ENCODE measurements at regions of chr20 and their contacts with region 1.

Region 1: DNA sequence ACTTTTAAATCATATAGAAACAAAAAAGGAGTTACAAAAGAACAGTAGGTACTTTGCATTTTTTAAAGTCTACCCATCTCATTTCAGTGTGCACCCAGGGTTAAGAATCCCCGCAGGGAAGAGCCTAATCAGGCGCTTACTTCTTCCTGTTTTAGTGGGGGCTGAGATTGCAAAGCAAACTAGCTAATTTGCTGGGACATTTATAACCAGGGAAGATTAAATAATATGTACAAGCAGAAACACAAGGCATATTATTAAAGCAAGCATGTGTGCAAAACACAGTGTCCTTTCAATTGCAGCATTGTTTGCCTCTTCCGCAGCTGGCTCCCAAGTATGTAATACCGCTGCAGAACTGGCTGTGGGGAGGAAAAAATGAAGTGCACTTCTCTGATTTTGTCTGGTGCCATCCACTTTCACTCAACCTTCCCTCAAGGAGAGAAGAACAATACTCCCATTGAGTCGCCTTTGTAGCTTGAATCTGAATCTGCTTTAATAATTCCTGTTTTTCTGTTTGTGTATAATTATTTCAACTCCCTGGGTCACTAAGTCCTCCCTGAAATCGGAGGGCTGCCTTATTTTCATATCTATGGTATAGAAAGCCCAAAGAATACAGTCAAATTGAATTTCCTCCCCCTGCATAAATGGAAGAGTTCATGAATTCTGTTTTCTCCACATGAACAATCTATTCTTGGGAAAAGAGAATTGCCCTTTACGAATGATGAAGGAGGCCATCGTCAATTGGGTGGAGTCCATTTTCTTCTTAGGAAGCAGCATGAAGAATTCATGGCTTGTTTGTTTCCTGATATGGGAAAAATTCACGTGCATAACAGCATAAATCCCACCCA is 23.3 kb upstream of the BCAS1 start:
- DNase-seq: no peak
- ATAC-seq: no peak

Region 2: GRCh38 chr20:54199721-54200176 is 106.1 kb after region 1 on chr20:
- intact Hi-C with region 1: loop called (anchors 5 to 10 kb)
- DNase-seq: peak; percentile 56 to 83
- ATAC-seq: peak; percentile 39

Measured in left colon (tissue), 2 donors.